Transverse colon (tissue), 4 donors: ENCODE measurements at regions of chr11 and their contacts with region 1.

Region 1: DNA sequence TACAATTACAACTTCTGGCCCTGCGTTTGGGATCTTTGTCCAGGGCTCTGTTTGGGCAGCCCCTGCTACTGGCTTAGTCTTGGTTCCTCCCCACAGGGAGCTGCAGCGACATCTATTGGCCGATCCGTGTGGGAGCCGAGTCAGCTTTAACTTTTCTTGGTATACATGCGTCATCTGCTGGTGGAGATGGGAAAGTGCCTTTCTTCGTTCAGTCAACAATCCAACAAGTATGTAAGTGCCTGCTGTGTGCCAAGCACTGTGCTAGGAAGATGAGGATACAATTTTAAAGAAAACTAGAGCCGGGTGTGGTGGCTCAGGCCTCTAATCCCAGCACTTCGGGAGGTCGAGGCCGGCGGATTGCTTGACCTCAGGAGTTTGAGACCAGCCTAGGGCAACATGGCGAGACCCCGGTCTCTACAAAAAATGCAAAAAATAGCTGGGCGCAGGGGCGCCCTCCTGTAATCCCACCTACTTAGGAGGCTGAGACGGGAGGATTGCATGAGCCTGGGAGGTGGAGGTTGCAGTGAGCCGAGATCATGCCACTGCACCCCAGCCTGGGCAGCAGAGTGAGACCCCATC is 8.2 kb downstream of the TPBGL start:
- DNase-seq: peak; percentile 91
- H3K4me3 ChIP-seq: no peak overlapping the region
- H3K27ac ChIP-seq: no peak overlapping the region
- H3K4me1 ChIP-seq: peaks cover 0 to 4% (median 0%) of the 10 kb centered on the region in 4 donors
- H3K27me3 ChIP-seq: peaks cover 15% of the 10 kb centered on the region
- CTCF ChIP-seq: peak; percentile 96 to 100 (median 99)
- EP300 ChIP-seq: no peak
- POLR2A ChIP-seq: no peak

Region 2: DNA sequence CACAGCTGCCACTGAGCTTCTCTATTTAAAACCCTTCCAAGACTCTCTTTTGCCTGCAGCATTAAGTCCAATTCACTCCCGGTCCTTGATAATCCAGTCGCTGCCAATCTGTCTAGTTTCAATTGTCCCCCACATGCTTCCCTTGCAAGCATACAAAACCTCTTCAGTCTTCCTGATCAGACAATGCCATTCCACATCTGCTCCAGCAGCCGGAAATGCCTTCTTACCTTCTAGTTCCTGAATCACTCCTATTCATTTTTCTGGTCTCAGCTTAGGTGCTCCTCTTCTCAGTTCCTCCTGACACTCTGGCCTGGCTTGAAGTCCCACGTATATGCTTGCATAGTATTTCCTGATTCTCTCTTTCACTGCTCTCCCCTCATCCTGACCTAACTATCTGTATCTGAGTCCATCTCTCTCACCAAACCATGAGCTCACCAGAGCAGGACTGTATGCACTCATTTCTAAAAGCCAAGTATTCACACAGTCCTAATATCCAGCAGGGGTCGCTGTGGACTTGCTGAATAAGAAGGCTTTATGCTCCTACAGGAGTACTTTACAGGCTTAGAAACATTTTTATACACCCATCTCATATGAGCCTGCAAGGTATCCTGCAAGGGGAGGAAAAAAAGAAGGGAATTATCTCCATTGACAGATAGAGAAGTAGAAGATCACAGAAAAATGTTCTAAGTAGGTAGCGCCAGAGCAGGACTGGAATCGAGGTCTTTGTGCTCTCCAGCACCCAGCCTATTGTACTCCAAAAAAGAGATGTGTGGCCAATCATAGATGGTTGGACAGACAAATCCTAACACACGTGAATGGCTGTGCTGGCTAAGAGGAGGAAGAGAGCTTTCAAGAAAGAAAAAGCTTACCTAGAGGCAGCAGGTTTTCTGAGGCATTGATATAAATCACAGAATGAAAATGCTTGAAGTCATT is 319.1 kb before region 1 on chr11:
- in situ Hi-C with region 1: loop called in 3 of 4 experiments (anchors 25 kb)
- intact Hi-C with region 1: loop called (anchors 5 kb)
- DNase-seq: peak; percentile 67
- H3K4me3 ChIP-seq: no peak overlapping the region
- H3K27ac ChIP-seq: no peak overlapping the region
- H3K4me1 ChIP-seq: no peaks in the 10 kb centered on the region
- H3K27me3 ChIP-seq: no peaks in the 10 kb centered on the region
- CTCF ChIP-seq: peak; percentile 82 to 86 (median 85)
- EP300 ChIP-seq: no peak
- POLR2A ChIP-seq: no peak

Region 3: DNA sequence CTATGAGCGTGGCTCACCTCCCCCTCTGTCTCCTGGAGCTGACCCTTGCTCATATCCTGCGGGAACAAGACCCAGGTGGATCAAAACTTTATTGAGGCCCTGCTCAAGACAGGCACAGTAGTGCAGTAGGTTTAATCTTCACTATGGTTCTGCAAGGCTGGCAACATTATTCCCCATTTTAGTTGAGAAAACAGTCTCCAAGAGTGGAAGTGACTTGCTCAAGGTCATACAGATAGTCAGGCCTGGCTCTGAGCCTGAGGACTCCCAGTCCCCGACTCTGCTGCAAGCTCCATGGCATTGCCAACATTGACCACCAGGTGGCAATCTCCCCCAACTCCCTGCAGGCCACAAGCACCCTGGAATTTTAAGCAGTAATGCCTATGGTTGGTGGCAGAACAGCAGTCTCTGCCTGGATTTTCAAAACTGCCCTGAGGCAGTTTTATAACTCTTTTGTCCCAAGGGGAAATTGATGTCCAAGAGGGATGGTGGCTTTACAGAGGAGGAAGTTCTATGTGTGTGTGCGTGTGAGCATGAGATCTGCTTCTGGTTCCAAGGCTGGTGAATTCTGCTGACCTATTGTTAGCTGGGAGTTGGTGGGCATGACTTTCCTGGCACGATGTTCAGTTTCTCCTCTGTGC is 225.9 kb before region 1 on chr11:
- in situ Hi-C with region 1: loop called (anchors 10 to 25 kb)
- intact Hi-C with region 1: loop called (anchors 5 kb)
- DNase-seq: peak; percentile 81
- H3K4me3 ChIP-seq: no peak overlapping the region
- H3K27ac ChIP-seq: no peak overlapping the region
- H3K4me1 ChIP-seq: no peaks in the 10 kb centered on the region
- H3K27me3 ChIP-seq: no peaks in the 10 kb centered on the region
- CTCF ChIP-seq: peak; percentile 89 to 95 (median 92)
- EP300 ChIP-seq: no peak
- POLR2A ChIP-seq: no peak

Region 4: DNA sequence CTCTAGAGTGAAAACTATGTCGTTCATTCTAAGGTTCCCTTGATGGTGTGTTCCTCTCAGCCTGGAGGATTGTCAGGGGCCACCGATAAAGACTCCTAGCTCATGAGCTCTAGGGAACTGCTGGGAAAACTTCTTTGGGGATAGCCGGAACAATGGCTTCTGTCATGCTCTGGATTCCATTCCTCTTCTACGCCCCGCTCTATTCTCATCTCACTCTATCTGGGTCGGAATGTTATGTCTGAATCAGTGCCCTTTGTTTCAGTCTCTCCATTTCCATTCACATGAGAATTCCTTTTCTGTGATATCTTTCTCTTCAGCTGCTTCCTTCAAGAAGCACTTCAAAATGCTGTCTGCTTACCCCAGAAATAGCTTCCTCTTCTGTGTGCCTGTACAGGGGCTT is 114.8 kb before region 1 on chr11:
- in situ Hi-C with region 1: loop called in 1 of 4 experiments (anchors 5 kb)
- intact Hi-C with region 1: no loop called
- DNase-seq: no peak
- H3K4me3 ChIP-seq: no peak overlapping the region
- H3K27ac ChIP-seq: no peak overlapping the region
- H3K4me1 ChIP-seq: no peaks in the 10 kb centered on the region
- H3K27me3 ChIP-seq: no peaks in the 10 kb centered on the region
- CTCF ChIP-seq: no peak
- EP300 ChIP-seq: no peak
- POLR2A ChIP-seq: no peak

Region 5: DNA sequence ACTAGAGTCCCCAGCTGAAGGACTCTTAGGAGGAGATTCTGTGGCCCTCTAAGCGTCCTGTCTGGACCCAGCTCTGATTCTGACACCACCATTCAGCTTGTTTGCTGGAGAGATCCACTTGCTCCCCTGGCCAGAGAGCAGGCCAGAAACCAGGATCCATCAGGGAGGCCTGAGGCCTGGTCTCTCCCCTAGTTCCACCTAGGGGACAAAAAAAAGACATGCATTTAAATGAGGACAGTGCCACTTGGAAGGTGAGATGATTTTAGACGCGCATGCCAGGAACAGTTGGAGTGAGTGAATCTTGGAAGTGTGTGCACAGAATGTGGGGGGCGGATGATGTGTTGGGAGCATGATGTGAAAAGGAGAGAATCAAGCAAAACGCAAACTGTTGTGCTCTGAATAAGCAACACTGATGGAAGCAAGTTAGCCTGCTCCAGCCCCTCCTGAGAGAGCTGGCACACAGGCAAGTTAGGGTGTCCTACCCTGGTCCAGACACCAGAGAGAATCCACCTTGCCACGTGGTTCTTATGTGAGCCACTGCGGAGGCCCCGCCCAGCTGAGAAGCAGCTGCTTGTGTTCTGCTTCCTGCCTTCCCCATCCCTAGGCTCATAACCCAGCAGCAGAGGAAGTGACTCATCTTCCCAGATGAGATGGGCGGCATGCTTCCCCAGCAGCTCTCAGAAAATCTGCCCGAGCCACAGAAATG is 105.9 kb before region 1 on chr11:
- in situ Hi-C with region 1: loop called in 3 of 4 experiments (anchors 5 to 10 kb)
- intact Hi-C with region 1: loop called (anchors 5 kb)
- DNase-seq: peak; percentile 70
- H3K4me3 ChIP-seq: no peak overlapping the region
- H3K27ac ChIP-seq: peak overlapping the region; percentile 14 to 61 (median 35)
- H3K4me1 ChIP-seq: peaks cover 0 to 44% (median 19%) of the 10 kb centered on the region in 4 donors
- H3K27me3 ChIP-seq: no peaks in the 10 kb centered on the region
- CTCF ChIP-seq: peak in 1 of 5 experiments; percentile 20
- EP300 ChIP-seq: no peak
- POLR2A ChIP-seq: no peak